CD4-positive, alpha-beta T cell (primary cell): ENCODE measurements at regions of chr7 and their contacts with region 1.

Region 1: GRCh38 chr7:140175221-140176121 is 1.3 kb downstream of the KDM7A start:
- DNase-seq: peak; percentile 77 to 98 (median 87)
- ATAC-seq: peak; percentile 67
- H3K4me3 ChIP-seq: peak overlapping the region; percentile 60
- H3K4me3 Mint-ChIP-seq: peak overlapping the region; percentile 93
- H3K27ac ChIP-seq: peak overlapping the region; percentile 76 to 94
- H3K27ac Mint-ChIP-seq: peak overlapping the region; percentile 84
- H3K4me1 ChIP-seq: peaks cover 30% of the 10 kb centered on the region
- H3K4me1 Mint-ChIP-seq: peaks cover 46% of the 10 kb centered on the region
- H3K27me3 ChIP-seq: no peaks in the 10 kb centered on the region
- H3K27me3 Mint-ChIP-seq: no peaks in the 10 kb centered on the region
- CTCF ChIP-seq: peak; percentile 84

Region 2: GRCh38 chr7:140062528-140063299 is 112.8 kb before region 1 on chr7 and contains the start of gene PARP12:
- CTCF ChIA-PET with region 1: interaction called, 3 read pairs
- POLR2A ChIA-PET with region 1: interaction called, 36 read pairs
- intact Hi-C with region 1: loop called in 1 of 2 experiments (anchors 2 kb)
- DNase-seq: peak; percentile 71 to 94 (median 86)
- ATAC-seq: peak; percentile 67
- H3K4me3 ChIP-seq: peak within 1 kb of the TSS; percentile 71
- H3K4me3 Mint-ChIP-seq: peak within 1 kb of the TSS; percentile 85
- H3K27ac ChIP-seq: peak within 1 kb of the TSS; percentile 67 to 82
- H3K27ac Mint-ChIP-seq: peak within 1 kb of the TSS; percentile 83
- H3K4me1 ChIP-seq: peaks cover 49% of the 10 kb centered on the region
- H3K4me1 Mint-ChIP-seq: peaks cover 55% of the 10 kb centered on the region
- H3K27me3 ChIP-seq: no peaks in the 10 kb centered on the region
- H3K27me3 Mint-ChIP-seq: no peaks in the 10 kb centered on the region
- CTCF ChIP-seq: no peak
- total RNA-seq, gene PARP12: 76.7 to 78.5 TPM

Region 3: DNA sequence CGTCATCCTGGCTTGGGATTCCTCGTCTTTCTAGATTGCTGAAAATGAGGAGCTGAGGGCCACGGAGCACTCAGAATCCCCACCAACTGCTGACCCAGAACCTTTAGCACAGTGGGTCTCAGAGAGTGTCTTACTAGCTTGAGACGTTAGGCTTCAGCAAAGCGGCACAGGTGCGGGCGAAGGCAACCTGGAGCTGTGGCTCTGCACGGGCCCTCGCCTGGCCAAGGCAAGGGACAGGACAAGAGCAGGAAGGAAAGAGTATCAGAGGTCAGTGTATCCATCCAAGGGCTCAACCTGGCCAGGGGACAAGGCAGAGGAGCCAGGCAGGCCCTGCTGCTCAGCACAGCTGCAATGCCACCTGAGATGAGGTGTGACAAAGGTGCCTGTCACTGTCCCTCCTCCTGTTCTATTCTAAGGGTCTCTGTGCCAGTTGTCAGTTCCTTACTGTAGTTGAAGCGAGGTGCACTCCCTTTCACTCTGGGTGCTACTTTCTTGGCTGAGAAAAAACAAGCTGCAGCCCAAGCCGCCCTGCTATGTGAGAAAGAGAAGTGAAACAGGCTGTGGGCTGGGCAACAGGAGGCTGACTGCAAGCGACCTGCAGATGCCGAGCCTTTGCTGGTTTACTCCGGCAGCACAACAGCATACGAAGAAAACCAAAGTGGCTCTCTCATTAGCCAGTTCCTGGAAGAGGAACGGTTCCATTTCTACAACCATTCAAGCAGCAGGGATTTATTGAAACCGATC is 34.6 kb after region 1 on chr7:
- CTCF ChIA-PET with region 1: no interaction called
- POLR2A ChIA-PET with region 1: interaction called, 43 read pairs
- intact Hi-C with region 1: no loop called
- DNase-seq: peak in 11 of 14 experiments; percentile 15 to 66 (median 39)
- ATAC-seq: peak; percentile 74
- H3K4me3 ChIP-seq: peak overlapping the region; percentile 28
- H3K4me3 Mint-ChIP-seq: peak overlapping the region; percentile 56
- H3K27ac ChIP-seq: no peak overlapping the region
- H3K27ac Mint-ChIP-seq: peak overlapping the region; percentile 30
- H3K4me1 ChIP-seq: peaks cover 44% of the 10 kb centered on the region
- H3K4me1 Mint-ChIP-seq: peaks cover 65% of the 10 kb centered on the region
- H3K27me3 ChIP-seq: no peaks in the 10 kb centered on the region
- H3K27me3 Mint-ChIP-seq: no peaks in the 10 kb centered on the region
- CTCF ChIP-seq: no peak

Region 4: DNA sequence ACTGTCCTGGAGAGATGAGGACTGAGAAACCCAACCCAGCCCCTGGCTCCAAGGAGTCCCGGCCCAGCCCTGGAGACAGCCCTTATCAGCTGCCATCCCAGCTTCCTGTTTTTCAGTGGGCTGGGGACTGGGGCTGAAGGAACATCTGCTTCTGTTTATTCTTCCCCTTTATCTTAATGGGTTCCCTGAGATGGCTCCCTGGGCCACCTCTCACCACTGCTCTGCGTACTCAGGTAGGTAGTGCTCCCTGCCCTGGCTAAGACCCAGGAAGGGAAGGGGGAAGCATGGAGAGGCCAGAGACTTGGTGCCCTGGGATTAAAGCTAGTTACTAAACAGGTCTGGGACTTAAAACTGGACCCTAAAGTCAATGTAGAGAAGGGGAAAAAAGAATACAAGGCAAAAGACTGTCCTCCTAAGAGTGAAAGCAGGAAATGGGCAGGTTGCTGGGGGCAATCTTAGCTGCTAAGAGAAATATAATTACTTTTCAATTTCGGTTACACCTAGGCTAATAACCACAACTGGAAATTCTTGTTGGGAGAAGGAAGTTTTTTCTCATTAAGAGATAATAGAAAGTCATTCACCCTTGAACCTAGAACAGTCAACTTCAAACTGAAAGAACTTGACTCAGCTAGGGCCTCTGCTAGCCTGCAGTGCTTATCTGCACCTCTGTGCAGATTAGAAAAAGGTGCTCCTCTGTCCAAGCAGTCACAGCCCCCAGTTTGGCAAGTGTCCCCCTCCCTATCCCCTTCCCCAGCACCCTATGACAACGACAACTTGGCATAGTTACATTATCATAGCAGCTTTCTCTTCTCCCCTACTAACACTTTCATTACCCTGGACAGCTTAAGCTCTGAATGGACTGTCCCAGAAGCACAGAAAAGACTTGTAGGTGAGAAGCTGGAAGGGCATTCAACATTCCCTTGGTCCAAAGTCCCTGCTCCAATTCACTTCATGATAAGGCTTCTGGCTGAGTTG is 66.9 kb after region 1 on chr7:
- CTCF ChIA-PET with region 1: no interaction called
- POLR2A ChIA-PET with region 1: interaction called, 13 read pairs
- intact Hi-C with region 1: no loop called
- DNase-seq: peak in 2 of 14 experiments; percentile 31 to 35
- ATAC-seq: no peak
- H3K4me3 ChIP-seq: no peak overlapping the region
- H3K4me3 Mint-ChIP-seq: no peak overlapping the region
- H3K27ac ChIP-seq: no peak overlapping the region
- H3K27ac Mint-ChIP-seq: no peak overlapping the region
- H3K4me1 ChIP-seq: peaks cover 10% of the 10 kb centered on the region
- H3K4me1 Mint-ChIP-seq: peaks cover 8% of the 10 kb centered on the region
- H3K27me3 ChIP-seq: no peaks in the 10 kb centered on the region
- H3K27me3 Mint-ChIP-seq: no peaks in the 10 kb centered on the region
- CTCF ChIP-seq: no peak

Region 5: GRCh38 chr7:140326116-140326928 is 150.9 kb after region 1 on chr7:
- CTCF ChIA-PET with region 1: interaction called, 3 read pairs
- POLR2A ChIA-PET with region 1: no interaction called
- intact Hi-C with region 1: loop called (anchors 1 to 2 kb)
- DNase-seq: peak; percentile 34 to 74 (median 49)
- ATAC-seq: peak; percentile 86
- H3K4me3 ChIP-seq: no peak overlapping the region
- H3K4me3 Mint-ChIP-seq: no peak overlapping the region
- H3K27ac ChIP-seq: no peak overlapping the region
- H3K27ac Mint-ChIP-seq: no peak overlapping the region
- H3K4me1 ChIP-seq: peaks cover 10% of the 10 kb centered on the region
- H3K4me1 Mint-ChIP-seq: no peaks in the 10 kb centered on the region
- H3K27me3 ChIP-seq: no peaks in the 10 kb centered on the region
- H3K27me3 Mint-ChIP-seq: no peaks in the 10 kb centered on the region
- CTCF ChIP-seq: peak; percentile 56

Region 6: GRCh38 chr7:140638173-140638791 is 462.8 kb after region 1 on chr7:
- CTCF ChIA-PET with region 1: no interaction called
- POLR2A ChIA-PET with region 1: no interaction called
- intact Hi-C with region 1: no loop called
- DNase-seq: no peak
- ATAC-seq: no peak
- H3K4me3 ChIP-seq: no peak overlapping the region
- H3K4me3 Mint-ChIP-seq: no peak overlapping the region
- H3K27ac ChIP-seq: no peak overlapping the region
- H3K27ac Mint-ChIP-seq: no peak overlapping the region
- H3K4me1 ChIP-seq: peaks cover 20% of the 10 kb centered on the region
- H3K4me1 Mint-ChIP-seq: peaks cover 11% of the 10 kb centered on the region
- H3K27me3 ChIP-seq: peaks cover 48 to 60% of the 10 kb centered on the region in 2 experiments
- H3K27me3 Mint-ChIP-seq: peaks cover 68% of the 10 kb centered on the region
- CTCF ChIP-seq: no peak